T-cell (primary cell): ENCODE measurements at regions of chr3 and their contacts with region 1.

Region 1: GRCh38 chr3:29385046-29385830 is 104.4 kb downstream of the RBMS3 start:
- DNase-seq: no peak
- ATAC-seq: no peak
- H3K4me3 ChIP-seq: no peak overlapping the region
- H3K4me3 Mint-ChIP-seq: no peak overlapping the region
- H3K27ac ChIP-seq: no peak overlapping the region
- H3K27ac Mint-ChIP-seq: no peak overlapping the region
- H3K4me1 ChIP-seq: no peaks in the 10 kb centered on the region
- H3K4me1 Mint-ChIP-seq: no peaks in the 10 kb centered on the region
- H3K27me3 ChIP-seq: no peaks in the 10 kb centered on the region
- H3K27me3 Mint-ChIP-seq: no peaks in the 10 kb centered on the region

Region 2: GRCh38 chr3:28867836-28868235 is 517.4 kb before region 1 on chr3:
- CTCF ChIA-PET with region 1: no interaction called
- POLR2A ChIA-PET with region 1: no interaction called
- DNase-seq: no peak
- ATAC-seq: no peak
- H3K4me3 ChIP-seq: no peak overlapping the region
- H3K4me3 Mint-ChIP-seq: no peak overlapping the region
- H3K27ac ChIP-seq: no peak overlapping the region
- H3K27ac Mint-ChIP-seq: no peak overlapping the region
- H3K4me1 ChIP-seq: no peaks in the 10 kb centered on the region
- H3K4me1 Mint-ChIP-seq: no peaks in the 10 kb centered on the region
- H3K27me3 ChIP-seq: no peaks in the 10 kb centered on the region
- H3K27me3 Mint-ChIP-seq: no peaks in the 10 kb centered on the region

Region 3: GRCh38 chr3:29465836-29466235 is 80.6 kb after region 1 on chr3:
- CTCF ChIA-PET with region 1: interaction called in 1 of 2 experiments, 11 read pairs
- POLR2A ChIA-PET with region 1: no interaction called
- DNase-seq: no peak
- ATAC-seq: no peak
- H3K4me3 ChIP-seq: no peak overlapping the region
- H3K4me3 Mint-ChIP-seq: no peak overlapping the region
- H3K27ac ChIP-seq: no peak overlapping the region
- H3K27ac Mint-ChIP-seq: no peak overlapping the region
- H3K4me1 ChIP-seq: no peaks in the 10 kb centered on the region
- H3K4me1 Mint-ChIP-seq: no peaks in the 10 kb centered on the region
- H3K27me3 ChIP-seq: no peaks in the 10 kb centered on the region
- H3K27me3 Mint-ChIP-seq: peaks cover 0 to 4% of the 10 kb centered on the region in 2 donors